AG04449 (cell line): ENCODE measurements at regions of chr7 and their contacts with region 1.

Region 1: DNA sequence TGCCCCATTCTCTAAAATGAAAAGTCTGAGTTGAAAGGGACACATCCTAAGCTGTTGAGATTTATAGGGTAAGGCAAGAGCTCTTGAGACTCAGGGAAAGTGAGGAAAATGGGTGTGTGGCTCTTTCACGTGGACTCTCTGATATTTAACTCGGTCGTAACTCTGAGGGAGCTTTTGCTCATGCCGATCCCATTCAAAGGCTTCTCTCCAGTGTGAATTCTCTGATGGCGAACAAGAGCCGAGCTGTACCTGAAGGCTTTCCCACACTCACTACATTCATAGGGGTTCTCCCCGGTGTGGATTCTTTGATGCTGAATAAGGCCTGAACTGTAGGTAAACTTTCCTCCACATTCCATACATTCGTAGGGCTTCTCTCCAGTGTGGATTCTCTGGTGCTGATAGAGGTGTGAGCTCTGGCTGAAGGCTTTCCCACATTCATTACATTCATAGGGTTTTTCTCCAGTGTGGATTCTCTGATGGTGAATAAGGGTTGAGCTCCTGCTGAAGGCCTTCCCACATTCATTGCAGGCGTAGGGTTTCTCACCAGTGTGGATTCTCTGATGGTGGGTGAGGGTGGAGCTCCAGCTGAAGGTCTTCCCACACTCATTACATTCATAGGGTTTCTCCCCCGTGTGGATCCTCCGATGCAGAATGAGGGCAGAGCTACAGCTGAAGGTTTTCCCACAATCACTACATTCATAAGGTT is 10.4 kb downstream of the ZNF3 start:
- DNase-seq: no peak
- H3K4me3 ChIP-seq: no peak overlapping the region
- CTCF ChIP-seq: no peak

Region 2: DNA sequence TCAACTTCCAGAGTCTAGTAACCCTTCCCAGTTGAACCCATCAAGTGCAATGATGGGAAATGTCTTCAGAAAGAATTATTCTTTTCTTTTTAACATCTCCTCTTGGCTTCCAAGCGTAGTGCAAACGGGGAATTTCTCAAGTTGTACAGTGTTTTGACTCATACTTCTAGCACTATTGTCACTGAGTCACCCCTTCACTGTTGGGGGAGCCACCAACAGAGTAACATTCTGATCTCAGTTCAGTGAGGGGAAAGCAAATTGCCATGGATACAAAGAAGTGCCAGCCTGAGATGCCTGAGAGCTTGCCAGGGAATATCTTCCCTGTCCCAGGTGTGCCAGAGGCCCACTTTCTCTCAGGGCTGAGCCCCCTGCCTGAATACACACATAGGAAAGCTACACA is 422.3 kb before region 1 on chr7:
- CTCF ChIA-PET with region 1: no interaction called
- POLR2A ChIA-PET with region 1: no interaction called
- DNase-seq: no peak
- H3K4me3 ChIP-seq: no peak overlapping the region
- CTCF ChIP-seq: no peak

Region 3: GRCh38 chr7:100081535-100082102 is 10.4 kb after region 1 on chr7 and contains the start of gene ZNF3:
- CTCF ChIA-PET with region 1: interaction called, 13 read pairs
- POLR2A ChIA-PET with region 1: no interaction called
- DNase-seq: peak; percentile 95
- H3K4me3 ChIP-seq: peak within 1 kb of the TSS; percentile 97
- CTCF ChIP-seq: peak; percentile 98